Activated CD4-positive, alpha-beta memory T cell treated with anti-CD3 and anti-CD28 coated beads for 36 hours (primary cell): ENCODE measurements at regions of chr14 and their contacts with region 1.

Region 1: GRCh38 chr14:68685419-68686204 is 107.3 kb downstream of the ZFP36L1 start:
- DNase-seq: peak; percentile 92
- H3K4me3 Mint-ChIP-seq: peak overlapping the region; percentile 47
- H3K27ac Mint-ChIP-seq: peak overlapping the region; percentile 93
- H3K4me1 Mint-ChIP-seq: peaks cover 59% of the 10 kb centered on the region
- H3K27me3 Mint-ChIP-seq: no peaks in the 10 kb centered on the region

Region 2: DNA sequence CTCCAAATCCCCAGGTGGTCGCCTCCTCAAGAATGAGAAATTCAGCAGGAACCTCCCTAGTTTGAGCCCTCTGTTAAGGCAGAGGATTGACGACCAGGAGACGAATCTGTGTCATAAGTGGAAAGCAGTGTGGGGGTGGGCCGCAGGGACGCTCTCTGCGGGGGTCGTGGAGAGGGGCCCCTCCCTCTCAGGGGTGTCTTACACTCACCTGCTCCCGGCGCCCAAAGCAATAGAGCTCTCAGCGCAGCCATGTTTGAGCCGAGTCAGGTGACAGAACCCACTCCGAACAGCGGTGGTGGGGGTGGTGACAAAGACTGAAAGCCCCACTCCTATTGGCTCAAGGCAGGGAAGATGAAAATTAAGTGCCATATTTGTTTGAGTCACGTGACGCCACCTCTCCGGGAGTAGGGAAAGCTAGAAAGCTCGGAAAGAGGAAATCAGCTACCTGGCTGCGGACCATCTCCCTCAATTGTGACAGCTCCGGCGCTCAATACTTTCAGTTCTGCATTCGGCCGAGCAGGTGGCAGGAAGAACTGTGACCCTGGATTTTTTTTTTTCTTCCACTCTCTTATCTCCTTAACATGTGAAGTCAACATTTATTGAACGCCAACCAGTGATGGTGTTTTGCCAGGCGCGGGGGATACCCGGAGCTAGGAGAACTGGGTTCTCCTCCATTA is 869.1 kb before region 1 on chr14 and contains the start of gene ZFYVE26:
- CTCF ChIA-PET with region 1: no interaction called
- POLR2A ChIA-PET with region 1: no interaction called
- intact Hi-C with region 1: loop called (anchors 2 kb)
- DNase-seq: peak; percentile 95
- H3K4me3 Mint-ChIP-seq: peak within 1 kb of the TSS; percentile 93
- H3K27ac Mint-ChIP-seq: peak within 1 kb of the TSS; percentile 90
- H3K4me1 Mint-ChIP-seq: peaks cover 50% of the 10 kb centered on the region
- H3K27me3 Mint-ChIP-seq: no peaks in the 10 kb centered on the region
- total RNA-seq, gene ZFYVE26: 12.5 to 12.6 TPM

Region 3: DNA sequence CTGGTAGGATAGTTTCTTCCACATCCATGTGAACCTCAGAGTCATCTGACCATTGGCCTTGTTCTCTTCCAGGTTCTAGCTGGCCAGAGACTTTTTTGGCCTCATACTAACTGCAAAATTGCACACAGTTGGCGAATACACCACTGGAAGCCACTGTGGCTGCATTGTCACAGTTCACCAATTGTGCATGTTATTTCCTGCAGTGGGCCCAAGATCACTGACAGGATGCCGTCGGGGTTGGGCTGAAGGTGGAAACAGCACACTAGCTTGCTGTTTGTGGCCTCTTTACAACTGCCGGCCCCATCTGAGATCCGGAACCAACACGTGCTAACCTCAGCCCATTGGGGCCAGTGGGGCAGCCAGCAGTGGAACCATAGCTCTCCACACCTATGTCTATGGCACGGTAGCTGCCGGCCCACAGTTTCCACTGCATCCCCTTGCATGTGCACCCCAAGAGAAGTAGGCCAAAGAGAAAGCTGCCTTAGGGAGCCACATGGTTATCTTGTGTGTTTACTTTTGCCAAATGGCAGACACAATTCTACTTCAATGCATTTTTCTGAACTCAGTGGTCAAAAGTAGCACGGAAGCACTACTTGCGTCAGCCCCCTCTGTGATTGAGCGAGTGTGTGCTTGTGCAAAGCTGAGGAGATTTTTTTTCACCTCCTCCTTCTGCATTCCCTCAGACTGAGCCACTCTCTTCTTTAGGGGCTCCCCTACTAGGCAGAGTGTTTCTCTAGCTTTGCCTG is 402.1 kb before region 1 on chr14:
- CTCF ChIA-PET with region 1: no interaction called
- POLR2A ChIA-PET with region 1: interaction called, 5 read pairs
- intact Hi-C with region 1: loop called (anchors 10 kb)
- DNase-seq: peak; percentile 68
- H3K4me3 Mint-ChIP-seq: no peak overlapping the region
- H3K27ac Mint-ChIP-seq: peak overlapping the region; percentile 34
- H3K4me1 Mint-ChIP-seq: peaks cover 69% of the 10 kb centered on the region
- H3K27me3 Mint-ChIP-seq: no peaks in the 10 kb centered on the region

Region 4: GRCh38 chr14:68663385-68664076 is 22.1 kb before region 1 on chr14:
- CTCF ChIA-PET with region 1: interaction called, 7 read pairs
- POLR2A ChIA-PET with region 1: interaction called, 9 read pairs
- intact Hi-C with region 1: loop called (anchors 1 kb)
- DNase-seq: peak; percentile 72
- H3K4me3 Mint-ChIP-seq: peak overlapping the region; percentile 24
- H3K27ac Mint-ChIP-seq: peak overlapping the region; percentile 71
- H3K4me1 Mint-ChIP-seq: peaks cover 47% of the 10 kb centered on the region
- H3K27me3 Mint-ChIP-seq: no peaks in the 10 kb centered on the region

Region 5: GRCh38 chr14:68734231-68734775 is 48.7 kb after region 1 on chr14:
- CTCF ChIA-PET with region 1: no interaction called
- POLR2A ChIA-PET with region 1: interaction called, 7 read pairs
- intact Hi-C with region 1: loop called (anchors 2 kb)
- DNase-seq: peak; percentile 68
- H3K4me3 Mint-ChIP-seq: peak overlapping the region; percentile 28
- H3K27ac Mint-ChIP-seq: peak overlapping the region; percentile 86
- H3K4me1 Mint-ChIP-seq: peaks cover 35% of the 10 kb centered on the region
- H3K27me3 Mint-ChIP-seq: no peaks in the 10 kb centered on the region

Region 6: GRCh38 chr14:68795597-68796417 is 110.2 kb after region 1 on chr14:
- CTCF ChIA-PET with region 1: interaction called, 3 read pairs
- POLR2A ChIA-PET with region 1: interaction called, 8 read pairs
- intact Hi-C with region 1: loop called (anchors 1 kb)
- DNase-seq: peak; percentile 87
- H3K4me3 Mint-ChIP-seq: peak overlapping the region; percentile 89
- H3K27ac Mint-ChIP-seq: peak overlapping the region; percentile 99
- H3K4me1 Mint-ChIP-seq: peaks cover 48% of the 10 kb centered on the region
- H3K27me3 Mint-ChIP-seq: no peaks in the 10 kb centered on the region

Region 7: GRCh38 chr14:68884031-68885030 is 198.7 kb after region 1 on chr14:
- CTCF ChIA-PET with region 1: no interaction called
- POLR2A ChIA-PET with region 1: no interaction called
- intact Hi-C with region 1: no loop called
- DNase-seq: no peak
- H3K4me3 Mint-ChIP-seq: no peak overlapping the region
- H3K27ac Mint-ChIP-seq: no peak overlapping the region
- H3K4me1 Mint-ChIP-seq: no peaks in the 10 kb centered on the region
- H3K27me3 Mint-ChIP-seq: no peaks in the 10 kb centered on the region